ENCODE measurements at regions of chr17 and their contacts with region 1.

Region 1: GRCh38 chr17:55348749-55349354 is 72.8 kb downstream of the MMD start:
- DNase-seq: peak; percentile 56
- ATAC-seq: peak; percentile 80

Region 2: DNA sequence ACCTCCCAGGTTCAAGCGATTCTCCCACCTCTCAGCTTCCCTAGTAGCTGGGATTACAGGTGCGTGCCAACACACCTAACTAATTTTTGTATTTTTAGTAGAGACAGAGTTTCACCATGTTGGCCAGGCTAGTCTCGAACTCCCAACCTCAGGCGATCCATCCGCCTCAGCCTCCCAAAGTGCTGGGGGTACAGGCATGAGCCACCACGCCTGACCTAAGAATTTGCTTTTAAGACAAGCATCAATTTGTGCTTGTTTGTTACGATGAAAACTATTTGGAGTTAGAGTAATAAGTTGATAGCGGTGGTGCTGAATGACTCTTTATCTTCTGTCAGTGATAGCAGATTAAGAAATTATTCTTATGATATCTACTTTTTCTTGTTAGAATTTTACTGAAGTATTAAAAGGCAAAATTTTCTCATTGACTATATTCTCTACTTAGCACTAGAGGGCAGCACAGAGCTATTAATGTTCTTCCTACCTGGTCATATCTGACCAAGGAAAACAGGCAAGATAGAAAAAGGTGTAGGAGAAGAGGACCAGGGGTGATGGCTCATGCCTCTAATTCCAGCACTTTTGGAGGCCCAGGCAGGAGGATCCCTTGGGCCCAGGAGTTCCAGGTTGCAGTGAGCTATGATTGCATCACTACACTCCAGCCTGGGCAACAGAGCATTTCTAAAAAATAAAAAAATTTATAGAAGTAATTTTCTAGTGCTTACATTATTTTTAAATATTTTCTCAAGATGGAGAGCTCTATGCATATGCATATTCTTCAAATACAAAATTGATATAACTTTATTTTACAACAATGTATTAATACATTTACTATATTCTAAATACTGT is 355.8 kb before region 1 on chr17:
- intact Hi-C with region 1: loop called (anchors 2 kb)
- DNase-seq: no peak
- ATAC-seq: no peak

Region 3: DNA sequence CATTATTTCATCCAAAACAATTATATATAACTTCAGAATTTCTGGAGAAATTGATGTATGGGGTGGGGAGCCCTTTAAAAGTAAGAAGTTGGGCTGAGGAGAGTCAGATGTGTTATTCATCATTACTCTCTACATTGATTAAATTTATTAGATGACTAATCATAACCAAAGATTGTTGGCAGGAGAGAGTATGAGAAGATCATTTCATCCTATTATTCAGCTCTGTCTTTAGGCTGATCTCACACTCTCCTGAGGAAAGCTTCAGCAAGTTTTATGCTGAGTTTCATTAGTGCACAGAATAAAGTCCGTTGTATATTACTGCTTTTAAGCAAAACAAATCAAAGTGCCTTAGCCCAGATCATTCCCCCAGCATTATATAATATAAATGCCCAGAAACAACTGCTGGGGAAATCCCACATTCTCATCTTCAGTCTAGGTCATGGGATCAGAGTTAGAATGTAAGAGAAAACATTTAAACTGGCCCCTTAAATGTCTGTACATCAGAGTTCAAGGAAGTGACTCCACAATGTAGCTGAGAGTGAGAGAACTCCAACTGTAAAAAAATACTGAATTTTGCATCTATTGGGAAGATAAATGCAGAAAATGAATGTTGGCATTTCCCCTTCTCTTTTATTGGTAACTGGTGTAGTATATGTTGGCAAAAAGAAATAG is 214.2 kb before region 1 on chr17:
- intact Hi-C with region 1: loop called (anchors 10 kb)
- DNase-seq: no peak
- ATAC-seq: no peak

Region 4: GRCh38 chr17:55264645-55265298 is 84.1 kb before region 1 on chr17 and contains the start of gene HLF:
- intact Hi-C with region 1: loop called (anchors 2 kb)
- DNase-seq: peak; percentile 91
- ATAC-seq: peak; percentile 95
- total RNA-seq, gene HLF: 35.7 TPM

Region 5: GRCh38 chr17:55284001-55284884 is 64.6 kb before region 1 on chr17:
- intact Hi-C with region 1: no loop called
- DNase-seq: no peak
- ATAC-seq: no peak

Region 6: GRCh38 chr17:55513885-55514591 is 165.2 kb after region 1 on chr17:
- intact Hi-C with region 1: loop called (anchors 5 kb)
- DNase-seq: no peak
- ATAC-seq: peak; percentile 59